ENCODE measurements at regions of chr3 and their contacts with region 1.

Region 1: DNA sequence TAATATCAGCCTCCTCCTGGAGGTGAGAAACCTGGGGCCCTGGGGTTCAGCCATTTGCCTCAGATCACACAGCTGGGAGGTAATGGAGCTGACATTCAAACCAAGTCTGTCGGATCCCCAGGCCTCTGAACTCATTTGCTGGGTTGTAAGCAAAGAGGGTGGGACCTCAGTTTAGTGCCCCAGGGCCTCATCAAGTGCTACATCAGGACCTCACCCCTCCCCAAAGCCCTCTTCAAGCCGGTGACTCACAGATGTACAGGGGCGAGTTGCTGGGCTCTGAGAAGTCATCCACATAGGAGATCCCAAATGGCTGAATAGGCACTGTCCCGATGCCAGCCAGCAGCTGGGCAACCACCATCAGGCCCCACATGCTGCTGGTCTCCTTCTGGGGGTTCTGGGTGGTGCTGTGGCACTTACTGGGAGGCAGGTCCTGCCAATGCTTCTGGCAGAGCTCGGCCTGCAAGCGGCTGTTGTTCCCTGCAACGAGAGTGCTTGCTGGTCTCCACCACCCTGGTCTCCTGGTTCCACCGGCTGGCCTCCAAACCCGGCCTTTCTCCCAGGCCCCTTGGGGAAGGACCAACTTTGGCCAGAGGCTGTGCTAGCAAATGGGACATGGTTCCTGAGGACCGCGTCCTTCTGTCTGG is 59.2 kb upstream of the RAB6B start:
- DNase-seq: no peak
- H3K4me3 ChIP-seq: no peak overlapping the region
- H3K27ac ChIP-seq: no peak overlapping the region
- H3K4me1 ChIP-seq: no peaks in the 10 kb centered on the region
- H3K27me3 ChIP-seq: no peaks in the 10 kb centered on the region
- CTCF ChIP-seq: no peak
- EP300 ChIP-seq: no peak
- POLR2A ChIP-seq: no peak

Region 2: DNA sequence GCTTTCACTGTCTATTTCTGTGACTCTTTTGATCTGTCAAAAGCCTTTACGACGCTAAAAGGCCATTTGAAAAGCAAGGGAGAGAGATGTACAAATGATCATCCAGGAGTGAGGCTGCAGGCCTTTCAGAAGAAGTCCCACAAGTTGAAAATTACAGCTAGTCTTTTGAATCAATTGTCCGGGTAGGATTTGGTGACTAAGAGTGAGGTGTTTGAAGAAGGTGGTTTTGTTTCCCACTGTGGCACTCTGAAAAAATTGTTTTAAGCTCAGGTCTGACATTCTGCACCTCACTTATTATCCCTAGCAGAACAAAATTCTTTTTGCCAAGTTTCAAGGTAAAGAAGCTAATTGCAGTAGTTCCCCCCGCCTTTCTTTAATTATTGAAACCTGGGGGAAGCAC is 967.4 kb before region 1 on chr3:
- in situ Hi-C with region 1: no loop called
- intact Hi-C with region 1: loop called (anchors 5 kb)
- DNase-seq: no peak
- H3K4me3 ChIP-seq: no peak overlapping the region
- H3K27ac ChIP-seq: no peak overlapping the region
- H3K4me1 ChIP-seq: no peaks in the 10 kb centered on the region
- H3K27me3 ChIP-seq: no peaks in the 10 kb centered on the region
- CTCF ChIP-seq: no peak
- EP300 ChIP-seq: no peak
- POLR2A ChIP-seq: no peak

Measured in transverse colon (tissue), 4 donors.